ENCODE measurements at regions of chr5 and their contacts with region 1.

Region 1: GRCh38 chr5:87267574-87268125 is at the start of gene RASA1:
- DNase-seq: peak; percentile 87 to 96
- H3K4me3 ChIP-seq: peak within 1 kb of the TSS; percentile 71
- H3K27ac ChIP-seq: peak within 1 kb of the TSS; percentile 69
- H3K4me1 ChIP-seq: peaks cover 26% of the 10 kb centered on the region; the same call in 1 of the 2 replicates
- H3K27me3 ChIP-seq: no peaks in the 10 kb centered on the region
- CTCF ChIP-seq: no peak
- total RNA-seq, gene RASA1: 55.0 and 66.6 TPM in 2 replicates

Region 2: DNA sequence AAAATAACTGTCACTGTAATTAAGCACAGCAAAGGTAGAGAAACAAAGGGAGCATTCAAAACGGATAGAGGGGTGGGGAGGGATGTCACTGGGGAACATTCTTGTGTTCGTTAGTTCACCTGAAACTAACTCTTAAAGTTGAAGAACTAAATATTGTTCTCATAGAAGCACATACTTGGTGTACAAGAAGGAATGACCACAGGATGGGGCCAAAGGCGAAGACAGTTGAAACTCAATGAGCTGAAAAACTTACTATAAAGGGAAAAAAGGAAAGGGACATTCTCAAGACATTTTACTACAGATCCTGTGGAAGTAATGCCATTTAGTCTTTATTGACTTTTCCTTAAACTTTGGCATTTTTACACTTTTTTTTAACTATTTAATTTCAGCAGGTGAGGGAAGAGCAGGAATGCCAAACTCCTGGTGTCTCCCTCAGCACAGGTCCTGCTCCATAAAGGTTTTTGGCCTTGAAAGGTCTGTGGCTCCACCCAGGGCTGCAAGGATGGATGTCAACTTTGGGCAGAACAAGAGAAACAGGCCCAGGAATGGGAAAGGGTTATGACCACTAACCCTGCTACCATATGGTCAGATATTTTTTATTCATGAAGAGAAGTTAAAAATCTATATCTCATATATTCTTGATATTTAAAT is 197.6 kb before region 1 on chr5:
- CTCF ChIA-PET with region 1: interaction called, 7 read pairs
- POLR2A ChIA-PET with region 1: interaction called, 11 read pairs
- intact Hi-C with region 1: loop called (anchors 1 kb)
- DNase-seq: peak; percentile 37 to 45
- H3K4me3 ChIP-seq: no peak overlapping the region
- H3K27ac ChIP-seq: no peak overlapping the region
- H3K4me1 ChIP-seq: peaks cover 19% of the 10 kb centered on the region
- H3K27me3 ChIP-seq: no peaks in the 10 kb centered on the region
- CTCF ChIP-seq: peak; percentile 65

Region 3: GRCh38 chr5:87121304-87122150 is 146.1 kb before region 1 on chr5:
- CTCF ChIA-PET with region 1: no interaction called
- POLR2A ChIA-PET with region 1: interaction called, 5 read pairs
- intact Hi-C with region 1: loop called (anchors 1 kb)
- DNase-seq: peak; percentile 38 to 83
- H3K4me3 ChIP-seq: peak overlapping the region; percentile 13; the same call in 1 of the 2 replicates
- H3K27ac ChIP-seq: peak overlapping the region; percentile 92
- H3K4me1 ChIP-seq: peaks cover 52% of the 10 kb centered on the region
- H3K27me3 ChIP-seq: no peaks in the 10 kb centered on the region
- CTCF ChIP-seq: no peak

Region 4: GRCh38 chr5:87156643-87157042 is 111.0 kb before region 1 on chr5:
- CTCF ChIA-PET with region 1: no interaction called
- POLR2A ChIA-PET with region 1: interaction called, 31 read pairs
- intact Hi-C with region 1: loop called (anchors 10 kb)
- DNase-seq: no peak
- H3K4me3 ChIP-seq: no peak overlapping the region
- H3K27ac ChIP-seq: no peak overlapping the region
- H3K4me1 ChIP-seq: peaks cover 16% of the 10 kb centered on the region
- H3K27me3 ChIP-seq: no peaks in the 10 kb centered on the region
- CTCF ChIP-seq: no peak

Region 5: GRCh38 chr5:87210743-87211430 is 56.8 kb before region 1 on chr5:
- CTCF ChIA-PET with region 1: no interaction called
- POLR2A ChIA-PET with region 1: interaction called, 4 read pairs
- intact Hi-C with region 1: loop called (anchors 5 kb)
- DNase-seq: peak in 1 of 2 experiments; percentile 88
- H3K4me3 ChIP-seq: no peak overlapping the region
- H3K27ac ChIP-seq: peak overlapping the region; percentile 48
- H3K4me1 ChIP-seq: peaks cover 20% of the 10 kb centered on the region
- H3K27me3 ChIP-seq: no peaks in the 10 kb centered on the region
- CTCF ChIP-seq: no peak

Region 6: DNA sequence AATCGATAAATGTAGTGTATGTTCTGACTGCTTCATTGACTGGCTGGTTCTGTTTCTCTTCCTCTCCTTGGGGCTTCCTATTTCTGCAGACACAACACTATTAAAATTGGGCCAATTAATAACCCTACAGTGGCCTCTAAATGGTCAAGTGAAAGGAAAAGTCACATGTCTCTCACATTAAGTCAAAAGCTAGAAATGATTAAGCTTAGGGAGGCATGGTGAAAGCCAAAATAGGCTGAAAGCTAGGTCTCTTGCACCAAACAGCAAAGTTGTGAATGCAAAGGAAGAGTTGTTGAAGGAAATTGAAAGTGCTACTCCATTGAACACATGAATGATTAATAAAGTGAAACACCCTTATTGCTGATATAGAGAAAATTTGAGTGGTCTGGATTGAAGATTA is 86.8 kb after region 1 on chr5:
- CTCF ChIA-PET with region 1: no interaction called
- POLR2A ChIA-PET with region 1: no interaction called
- intact Hi-C with region 1: no loop called
- DNase-seq: no peak
- H3K4me3 ChIP-seq: no peak overlapping the region
- H3K27ac ChIP-seq: no peak overlapping the region
- H3K4me1 ChIP-seq: no peaks in the 10 kb centered on the region
- H3K27me3 ChIP-seq: no peaks in the 10 kb centered on the region
- CTCF ChIP-seq: no peak

Region 7: GRCh38 chr5:87671146-87671545 is 403.5 kb after region 1 on chr5:
- CTCF ChIA-PET with region 1: no interaction called
- POLR2A ChIA-PET with region 1: no interaction called
- intact Hi-C with region 1: no loop called
- DNase-seq: no peak
- H3K4me3 ChIP-seq: no peak overlapping the region
- H3K27ac ChIP-seq: no peak overlapping the region
- H3K4me1 ChIP-seq: no peaks in the 10 kb centered on the region
- H3K27me3 ChIP-seq: no peaks in the 10 kb centered on the region
- CTCF ChIP-seq: no peak

Measured in PC-9 (cell line).